ENCODE measurements at regions of chr14 and their contacts with region 1.

Region 1: DNA sequence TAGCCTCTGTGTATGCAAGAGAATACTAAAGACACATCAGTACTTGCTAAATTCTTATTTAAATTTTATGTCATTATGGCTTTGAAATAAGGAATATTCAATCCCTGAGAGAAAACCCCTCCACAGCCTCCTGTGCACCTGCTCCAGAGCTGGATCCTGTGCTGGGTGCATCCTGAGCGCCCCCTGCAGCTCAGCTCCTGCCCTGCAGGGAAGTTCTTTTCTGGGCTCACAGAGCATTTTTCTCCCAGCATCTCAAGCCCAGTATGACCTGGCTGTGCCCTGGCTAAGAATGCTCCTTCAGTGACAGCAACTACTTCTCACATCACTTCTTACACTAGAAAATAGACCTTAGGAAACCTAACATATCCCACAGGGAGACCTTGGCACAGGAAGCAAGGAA is 1211.7 kb downstream of the TMEM121 start:
- DNase-seq: peak in 1 of 5 donors; percentile 48
- H3K4me3 ChIP-seq: no peak overlapping the region
- H3K4me3 Mint-ChIP-seq: peak overlapping the region in 1 of 8 donors; percentile 86
- H3K27ac ChIP-seq: no peak overlapping the region
- H3K27ac Mint-ChIP-seq: peak overlapping the region in 1 of 7 donors; percentile 97
- H3K4me1 ChIP-seq: peaks cover 4% of the 10 kb centered on the region
- H3K4me1 Mint-ChIP-seq: peaks cover 0 to 12% (median 5%) of the 10 kb centered on the region in 4 donors
- H3K27me3 ChIP-seq: no peaks in the 10 kb centered on the region
- H3K27me3 Mint-ChIP-seq: no peaks in the 10 kb centered on the region

Region 2: DNA sequence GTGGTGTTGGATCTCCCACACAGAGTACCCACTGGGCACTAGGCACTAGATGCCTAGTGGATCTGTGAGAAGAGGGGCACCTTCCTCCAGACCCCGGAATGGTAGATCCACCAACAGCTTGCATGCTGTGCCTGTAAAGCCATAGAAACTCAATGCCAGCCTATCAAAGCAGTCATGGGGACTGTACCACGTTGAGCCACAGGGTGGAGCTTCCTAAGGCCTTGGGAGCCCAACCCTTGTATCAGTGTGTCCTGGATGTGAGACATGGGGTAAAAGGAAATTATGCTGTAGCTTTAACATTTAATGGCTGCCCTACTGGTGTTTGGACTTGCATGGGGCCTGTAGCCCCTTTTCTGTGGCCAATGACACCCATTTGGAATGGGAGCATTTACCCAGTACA is 186.8 kb before region 1 on chr14:
- CTCF ChIA-PET with region 1: no interaction called
- POLR2A ChIA-PET with region 1: no interaction called
- intact Hi-C with region 1: no loop called
- DNase-seq: no peak
- H3K4me3 ChIP-seq: no peak overlapping the region
- H3K4me3 Mint-ChIP-seq: no peak overlapping the region
- H3K27ac ChIP-seq: no peak overlapping the region
- H3K27ac Mint-ChIP-seq: no peak overlapping the region
- H3K4me1 ChIP-seq: no peaks in the 10 kb centered on the region
- H3K4me1 Mint-ChIP-seq: no peaks in the 10 kb centered on the region
- H3K27me3 ChIP-seq: no peaks in the 10 kb centered on the region
- H3K27me3 Mint-ChIP-seq: peaks cover 3 to 7% of the 10 kb centered on the region in 2 donors

Region 3: GRCh38 chr14:106622200-106622745 is 115.8 kb before region 1 on chr14:
- CTCF ChIA-PET with region 1: no interaction called
- POLR2A ChIA-PET with region 1: no interaction called
- intact Hi-C with region 1: no loop called
- DNase-seq: peak in 4 of 5 donors; percentile 21 to 35 (median 24)
- H3K4me3 ChIP-seq: no peak overlapping the region
- H3K4me3 Mint-ChIP-seq: peak overlapping the region in 5 of 8 donors; percentile 2 to 46 (median 31)
- H3K27ac ChIP-seq: no peak overlapping the region
- H3K27ac Mint-ChIP-seq: no peak overlapping the region
- H3K4me1 ChIP-seq: peaks cover 15% of the 10 kb centered on the region
- H3K4me1 Mint-ChIP-seq: peaks cover 3 to 16% (median 9%) of the 10 kb centered on the region in 4 donors
- H3K27me3 ChIP-seq: no peaks in the 10 kb centered on the region
- H3K27me3 Mint-ChIP-seq: peaks cover 2 to 3% of the 10 kb centered on the region in 2 donors

Region 4: DNA sequence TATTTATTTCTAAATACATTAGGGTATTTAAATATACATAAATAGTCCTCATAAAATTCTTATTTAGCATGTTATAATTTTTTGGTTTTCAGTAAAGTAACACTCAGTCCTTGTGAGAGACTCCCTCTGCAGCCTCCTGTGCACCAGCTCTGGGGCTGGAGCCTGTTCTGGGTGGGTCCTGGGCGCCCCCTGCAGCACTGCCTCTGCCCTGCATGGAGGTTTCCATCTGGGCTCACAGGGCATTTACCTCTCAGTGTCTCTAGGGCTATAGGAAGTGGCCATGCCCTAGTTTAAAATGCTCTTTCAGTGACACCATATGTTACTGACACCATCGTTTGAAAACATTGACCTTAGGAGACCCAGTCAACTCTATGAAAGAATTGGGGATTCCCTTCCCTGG is 56.5 kb before region 1 on chr14:
- CTCF ChIA-PET with region 1: no interaction called
- POLR2A ChIA-PET with region 1: no interaction called
- intact Hi-C with region 1: loop called (anchors 5 kb)
- DNase-seq: no peak
- H3K4me3 ChIP-seq: no peak overlapping the region
- H3K4me3 Mint-ChIP-seq: no peak overlapping the region
- H3K27ac ChIP-seq: no peak overlapping the region
- H3K27ac Mint-ChIP-seq: no peak overlapping the region
- H3K4me1 ChIP-seq: no peaks in the 10 kb centered on the region
- H3K4me1 Mint-ChIP-seq: no peaks in the 10 kb centered on the region
- H3K27me3 ChIP-seq: no peaks in the 10 kb centered on the region
- H3K27me3 Mint-ChIP-seq: peaks cover 15 to 32% of the 10 kb centered on the region in 2 donors

Region 5: GRCh38 chr14:106694627-106695401 is 43.3 kb before region 1 on chr14:
- CTCF ChIA-PET with region 1: interaction called, 10 read pairs
- POLR2A ChIA-PET with region 1: no interaction called
- intact Hi-C with region 1: no loop called
- DNase-seq: peak; percentile 33 to 56 (median 46)
- H3K4me3 ChIP-seq: no peak overlapping the region
- H3K4me3 Mint-ChIP-seq: peak overlapping the region in 3 of 8 donors; percentile 13 to 55 (median 34)
- H3K27ac ChIP-seq: no peak overlapping the region
- H3K27ac Mint-ChIP-seq: peak overlapping the region in 1 of 7 donors; percentile 42
- H3K4me1 ChIP-seq: peaks cover 9% of the 10 kb centered on the region
- H3K4me1 Mint-ChIP-seq: peaks cover 13 to 25% (median 15%) of the 10 kb centered on the region in 4 donors
- H3K27me3 ChIP-seq: no peaks in the 10 kb centered on the region
- H3K27me3 Mint-ChIP-seq: peaks cover 0 to 1% of the 10 kb centered on the region in 2 donors

Region 6: GRCh38 chr14:106802423-106803364 is 64.6 kb after region 1 on chr14:
- CTCF ChIA-PET with region 1: no interaction called
- POLR2A ChIA-PET with region 1: no interaction called
- intact Hi-C with region 1: no loop called
- DNase-seq: no peak
- H3K4me3 ChIP-seq: no peak overlapping the region
- H3K4me3 Mint-ChIP-seq: no peak overlapping the region
- H3K27ac ChIP-seq: no peak overlapping the region
- H3K27ac Mint-ChIP-seq: no peak overlapping the region
- H3K4me1 ChIP-seq: no peaks in the 10 kb centered on the region
- H3K4me1 Mint-ChIP-seq: peaks cover 0 to 2% (median 0%) of the 10 kb centered on the region in 4 donors
- H3K27me3 ChIP-seq: peaks cover 6% of the 10 kb centered on the region
- H3K27me3 Mint-ChIP-seq: peaks cover 29 to 45% of the 10 kb centered on the region in 2 donors